Thyroid gland (tissue), 4 donors: ENCODE measurements at regions of chr1 and their contacts with region 1.

Region 1: GRCh38 chr1:93814059-93814794 is 64.8 kb downstream of the DNTTIP2 start:
- DNase-seq: peak; percentile 65 to 68
- H3K4me3 ChIP-seq: no peak overlapping the region
- H3K27ac ChIP-seq: no peak overlapping the region
- H3K4me1 ChIP-seq: peaks cover 6 to 11% of the 10 kb centered on the region in 2 donors
- H3K27me3 ChIP-seq: no peaks in the 10 kb centered on the region
- CTCF ChIP-seq: peak; percentile 90 to 99 (median 98)
- POLR2A ChIP-seq: no peak

Region 2: GRCh38 chr1:93437976-93438605 is 376.1 kb before region 1 on chr1:
- intact Hi-C with region 1: loop called (anchors 10 kb)
- DNase-seq: no peak
- H3K4me3 ChIP-seq: no peak overlapping the region
- H3K27ac ChIP-seq: no peak overlapping the region
- H3K4me1 ChIP-seq: no peaks in the 10 kb centered on the region
- H3K27me3 ChIP-seq: no peaks in the 10 kb centered on the region
- CTCF ChIP-seq: peak; percentile 27 to 85 (median 56)
- POLR2A ChIP-seq: no peak

Region 3: GRCh38 chr1:93708734-93709481 is 105.3 kb before region 1 on chr1:
- intact Hi-C with region 1: no loop called
- DNase-seq: peak; percentile 36 to 40
- H3K4me3 ChIP-seq: no peak overlapping the region
- H3K27ac ChIP-seq: no peak overlapping the region
- H3K4me1 ChIP-seq: peaks cover 36 to 37% of the 10 kb centered on the region in 2 donors
- H3K27me3 ChIP-seq: no peaks in the 10 kb centered on the region
- CTCF ChIP-seq: no peak
- POLR2A ChIP-seq: no peak

Region 4: GRCh38 chr1:93768380-93768863 is 45.8 kb before region 1 on chr1:
- intact Hi-C with region 1: no loop called
- DNase-seq: no peak
- H3K4me3 ChIP-seq: no peak overlapping the region
- H3K27ac ChIP-seq: peak overlapping the region in 2 of 3 donors; percentile 45 to 66
- H3K4me1 ChIP-seq: peaks cover 14 to 20% of the 10 kb centered on the region in 2 donors
- H3K27me3 ChIP-seq: no peaks in the 10 kb centered on the region
- CTCF ChIP-seq: no peak
- POLR2A ChIP-seq: no peak